Activated T-helper 1 cell treated with anti-CD3 and anti-CD28 coated beads, Interleukin-12 subunit alpha, Interleukin-12 subunit beta, Interleukin-2, Interleukin-4 antibody, amounts not matched to agents 30 ng/mL and 10 ng/mL and 1 ng/mL, durations not matched to agents 14 hours and 24 hours and 36 hours (primary cell): ENCODE measurements at regions of chr2 and their contacts with region 1.

Region 1: DNA sequence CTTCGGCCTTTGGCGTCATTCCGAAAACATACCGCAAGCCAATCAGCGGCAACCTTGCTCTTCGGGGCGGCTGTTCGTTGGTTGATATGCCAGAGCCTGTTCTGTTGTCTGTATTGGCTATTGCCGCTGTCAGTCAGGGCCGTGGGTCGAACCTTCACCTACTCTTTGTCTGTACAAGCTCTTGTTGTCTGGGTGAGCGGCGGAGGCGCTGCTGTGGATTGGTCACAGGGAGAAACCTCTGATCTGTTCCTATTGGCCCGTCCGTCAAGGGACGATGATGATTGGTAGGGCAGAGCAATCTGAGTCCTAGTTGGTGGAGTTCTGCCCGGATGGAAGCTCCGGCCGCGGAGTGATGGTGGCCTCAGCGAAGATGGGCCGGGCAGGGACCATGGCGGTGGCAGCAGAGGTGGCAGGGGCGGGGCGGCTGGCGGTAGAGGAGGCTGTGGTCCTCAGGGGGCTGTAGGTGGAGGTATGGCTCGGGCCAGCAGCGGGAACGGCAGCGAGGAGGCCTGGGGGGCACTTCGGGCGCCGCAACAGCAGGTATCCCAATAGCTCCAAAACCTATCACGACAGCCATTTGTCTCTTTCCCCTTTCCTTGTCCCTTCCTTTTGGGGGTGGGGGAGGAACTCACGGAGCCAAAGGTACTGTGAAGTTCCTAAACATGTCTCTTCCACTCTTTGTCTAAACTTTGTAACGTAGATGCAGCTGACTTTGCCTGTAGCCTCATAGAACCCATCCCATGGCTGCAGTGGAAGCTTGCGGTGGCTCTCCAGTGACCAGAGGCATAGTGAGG is at the start of gene WBP1:
- DNase-seq: peak; percentile 99
- H3K4me3 Mint-ChIP-seq: peak within 1 kb of the TSS; percentile 98
- H3K27ac Mint-ChIP-seq: peak within 1 kb of the TSS; percentile 98
- H3K4me1 Mint-ChIP-seq: peaks cover 61% of the 10 kb centered on the region
- H3K27me3 Mint-ChIP-seq: no peaks in the 10 kb centered on the region
- total RNA-seq, gene WBP1: 32.6 and 35.3 TPM in 2 replicates

Region 2: GRCh38 chr2:73233154-73233931 is 1225.0 kb before region 1 on chr2 and contains the start of gene PRADC1:
- intact Hi-C with region 1: loop called (anchors 2 kb)
- DNase-seq: peak; percentile 96
- H3K4me3 Mint-ChIP-seq: peak within 1 kb of the TSS; percentile 95
- H3K27ac Mint-ChIP-seq: peak within 1 kb of the TSS; percentile 96
- H3K4me1 Mint-ChIP-seq: peaks cover 28% of the 10 kb centered on the region
- H3K27me3 Mint-ChIP-seq: no peaks in the 10 kb centered on the region
- total RNA-seq, gene PRADC1: 16.6 and 18.6 TPM in 2 replicates

Region 3: GRCh38 chr2:73828818-73829570 is 629.3 kb before region 1 on chr2 and contains the start of gene STAMBP:
- intact Hi-C with region 1: loop called (anchors 2 kb)
- DNase-seq: peak; percentile 90
- H3K4me3 Mint-ChIP-seq: peak within 1 kb of the TSS; percentile 98
- H3K27ac Mint-ChIP-seq: peak within 1 kb of the TSS; percentile 99
- H3K4me1 Mint-ChIP-seq: peaks cover 59% of the 10 kb centered on the region
- H3K27me3 Mint-ChIP-seq: peaks cover 5% of the 10 kb centered on the region
- total RNA-seq, gene STAMBP: 50.8 and 56.0 TPM in 2 replicates

Region 4: DNA sequence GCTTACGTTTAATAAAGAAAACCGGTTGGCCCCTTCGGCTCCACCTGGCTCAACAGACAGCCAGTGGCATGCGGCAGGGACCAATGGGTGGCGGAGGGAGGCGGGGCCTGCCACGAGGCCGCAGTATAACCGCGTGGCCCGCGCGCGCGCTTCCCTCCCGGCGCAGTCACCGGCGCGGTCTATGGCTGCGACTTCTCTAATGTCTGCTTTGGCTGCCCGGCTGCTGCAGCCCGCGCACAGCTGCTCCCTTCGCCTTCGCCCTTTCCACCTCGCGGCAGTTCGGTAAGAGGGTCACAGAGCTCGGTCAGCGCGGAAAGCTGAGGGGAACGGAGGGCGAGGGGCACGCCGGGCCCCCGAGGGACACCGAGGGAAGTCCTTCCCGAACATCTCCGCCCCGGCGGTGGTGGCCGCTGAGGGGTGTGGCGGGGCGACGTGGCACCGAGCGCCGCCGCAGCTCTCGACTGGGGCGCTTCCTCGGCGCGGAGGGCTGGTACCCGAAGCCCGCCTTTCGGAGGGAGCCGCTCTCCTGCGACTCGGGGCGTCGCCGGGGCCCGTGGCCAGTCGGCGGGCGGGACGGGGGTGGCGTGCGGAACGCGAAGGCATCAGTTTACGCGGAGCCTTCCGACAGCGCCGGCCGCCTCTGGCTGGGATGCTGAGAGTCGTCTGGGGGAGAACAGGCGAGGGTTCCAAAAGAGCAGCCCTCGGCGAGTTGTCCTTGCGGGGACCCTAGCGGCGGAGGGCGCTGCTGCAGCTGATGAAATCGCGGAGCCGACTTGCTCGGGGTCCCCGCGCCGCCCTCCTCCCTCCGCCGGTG is 259.7 kb before region 1 on chr2 and contains the start of gene MTHFD2:
- intact Hi-C with region 1: loop called (anchors 1 kb)
- DNase-seq: peak; percentile 91
- H3K4me3 Mint-ChIP-seq: peak within 1 kb of the TSS; percentile 98
- H3K27ac Mint-ChIP-seq: peak within 1 kb of the TSS; percentile 100
- H3K4me1 Mint-ChIP-seq: peaks cover 59% of the 10 kb centered on the region
- H3K27me3 Mint-ChIP-seq: no peaks in the 10 kb centered on the region
- total RNA-seq, gene MTHFD2: 437 and 457 TPM in 2 replicates

Region 5: GRCh38 chr2:74472086-74472944 is 14.0 kb after region 1 on chr2 and contains the start of gene MRPL53:
- intact Hi-C with region 1: loop called (anchors 1 kb)
- DNase-seq: peak; percentile 95
- H3K4me3 Mint-ChIP-seq: peak within 1 kb of the TSS; percentile 99
- H3K27ac Mint-ChIP-seq: peak within 1 kb of the TSS; percentile 94
- H3K4me1 Mint-ChIP-seq: peaks cover 21% of the 10 kb centered on the region
- H3K27me3 Mint-ChIP-seq: peaks cover 2% of the 10 kb centered on the region
- total RNA-seq, gene MRPL53: 118 and 124 TPM in 2 replicates

Region 6: DNA sequence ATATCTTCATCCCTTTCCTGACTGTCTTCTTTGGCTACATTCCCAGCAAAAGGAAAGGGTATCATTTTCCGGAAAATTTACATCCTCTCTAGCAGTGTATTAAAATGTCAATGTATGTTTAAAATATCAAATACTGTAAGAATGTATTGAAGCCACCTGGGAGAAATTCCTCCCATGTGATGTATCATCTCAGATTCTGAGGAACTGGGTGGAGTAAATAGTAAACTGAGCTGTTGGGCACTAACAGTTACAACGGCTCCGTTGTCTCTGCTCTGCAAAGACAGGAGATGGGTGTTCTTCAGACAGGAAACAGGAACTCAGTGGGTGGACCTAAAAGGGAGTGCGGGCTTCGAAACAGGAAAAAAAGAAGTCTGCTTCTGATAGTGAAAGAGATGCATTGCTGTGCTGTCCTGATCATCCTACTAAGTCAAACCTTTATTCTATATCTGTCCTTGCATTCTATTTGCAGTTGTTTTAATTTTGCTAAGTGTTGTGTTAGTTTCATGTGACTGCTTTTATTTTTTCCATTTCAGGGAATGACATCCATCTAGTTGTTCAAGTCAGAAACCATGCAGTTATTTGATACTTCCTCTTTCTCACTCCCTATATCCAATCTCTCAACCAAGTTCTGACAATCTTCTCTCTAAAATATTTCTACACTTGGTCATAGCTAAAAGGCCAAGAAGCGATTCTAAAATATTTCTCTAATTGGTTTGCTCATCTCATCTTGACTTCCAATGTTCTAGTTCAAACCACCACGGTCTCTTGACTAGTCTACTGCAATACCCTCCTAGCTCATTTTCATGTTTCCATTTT is 115.6 kb after region 1 on chr2:
- intact Hi-C with region 1: loop called (anchors 1 kb)
- DNase-seq: peak; percentile 31
- H3K4me3 Mint-ChIP-seq: peak overlapping the region; percentile 20
- H3K27ac Mint-ChIP-seq: peak overlapping the region; percentile 27
- H3K4me1 Mint-ChIP-seq: peaks cover 53% of the 10 kb centered on the region
- H3K27me3 Mint-ChIP-seq: no peaks in the 10 kb centered on the region

Region 7: GRCh38 chr2:74958274-74959105 is 500.2 kb after region 1 on chr2 and contains the start of gene POLE4:
- intact Hi-C with region 1: loop called (anchors 2 kb)
- DNase-seq: peak; percentile 89
- H3K4me3 Mint-ChIP-seq: peak within 1 kb of the TSS; percentile 85
- H3K27ac Mint-ChIP-seq: peak within 1 kb of the TSS; percentile 89
- H3K4me1 Mint-ChIP-seq: peaks cover 66% of the 10 kb centered on the region
- H3K27me3 Mint-ChIP-seq: no peaks in the 10 kb centered on the region
- total RNA-seq, gene POLE4: 48.4 and 56.7 TPM in 2 replicates